ENCODE measurements at regions of chr1 and their contacts with region 1.

Region 1: DNA sequence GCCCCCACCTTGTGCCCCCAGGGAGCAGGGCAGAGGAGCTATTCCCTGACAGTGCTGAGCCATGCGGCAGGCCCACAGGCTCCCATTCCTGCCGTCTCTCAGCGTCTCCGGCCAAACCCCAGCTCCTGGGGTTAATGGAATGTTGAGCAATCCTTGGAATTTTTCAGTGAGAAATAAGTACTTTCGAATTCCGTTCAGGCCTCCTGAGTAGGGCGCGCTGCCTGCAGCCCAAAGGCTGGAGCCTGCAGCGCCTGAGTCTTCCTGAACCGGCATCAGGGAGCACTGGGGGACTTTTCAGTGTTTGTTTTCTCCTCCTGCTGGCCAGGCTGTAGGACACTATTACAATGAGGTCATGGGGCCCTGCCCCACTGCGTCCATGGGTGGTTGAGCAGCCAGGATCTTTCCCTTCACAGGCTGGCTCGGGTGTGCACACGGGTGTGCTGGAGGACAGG is 33.3 kb upstream of the CSF1 start:
- DNase-seq: peak; percentile 90

Region 2: GRCh38 chr1:109821221-109821669 is 56.1 kb before region 1 on chr1:
- intact Hi-C with region 1: loop called (anchors 5 to 10 kb)
- DNase-seq: peak; percentile 95

Measured in posterior vena cava (tissue), 2 donors.